ENCODE measurements at regions of chr2 and their contacts with region 1.

Region 1: DNA sequence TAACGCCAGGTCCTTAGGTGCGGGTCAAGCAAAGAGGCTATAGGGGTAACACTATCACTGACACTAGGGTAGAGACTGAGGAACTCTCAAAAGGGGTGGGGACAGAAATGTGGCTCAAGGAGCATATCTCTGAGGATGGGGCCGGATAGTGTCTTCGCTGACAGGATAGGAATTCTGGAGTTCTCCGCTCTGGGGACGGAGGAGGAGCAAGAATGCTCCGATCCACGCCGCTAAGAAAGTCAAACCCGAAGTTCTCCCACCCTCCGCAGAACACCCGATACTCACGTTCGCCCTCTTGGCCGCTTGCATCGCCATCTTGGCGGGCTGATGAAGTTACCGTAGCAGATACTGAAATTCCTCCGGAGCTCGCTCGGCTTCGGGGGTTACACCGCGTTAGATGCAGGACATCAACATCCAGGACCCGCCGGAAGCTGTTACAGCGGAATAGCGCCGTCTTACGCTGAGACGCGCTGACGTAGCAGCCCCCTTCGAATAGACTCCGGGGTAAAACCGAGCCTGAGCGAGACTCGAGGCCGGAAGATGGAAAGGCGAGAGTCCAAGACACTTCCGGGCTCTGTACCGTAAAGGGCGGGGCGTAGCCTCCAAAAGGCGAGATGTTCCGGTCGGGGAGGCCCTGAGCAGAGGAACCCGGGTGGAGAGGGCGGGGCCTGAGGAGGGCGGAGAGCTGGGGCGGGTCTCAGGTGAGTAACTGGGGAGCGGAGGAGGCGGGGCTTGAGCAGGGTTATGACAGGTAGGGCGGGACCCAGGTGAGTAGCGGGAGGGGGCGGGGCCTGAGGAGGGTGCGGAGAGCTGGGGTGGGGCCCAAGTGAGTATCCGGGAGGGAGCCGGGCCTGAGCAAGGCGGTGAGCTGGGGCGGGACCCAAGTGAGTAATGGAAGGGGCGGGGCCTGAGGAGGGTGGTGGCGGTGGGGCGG is at the start of gene SF3B6:
- DNase-seq: peak; percentile 100
- H3K4me3 Mint-ChIP-seq: peak within 1 kb of the TSS; percentile 97
- H3K27ac Mint-ChIP-seq: peak within 1 kb of the TSS; percentile 97
- H3K4me1 Mint-ChIP-seq: peaks cover 22% of the 10 kb centered on the region
- H3K27me3 Mint-ChIP-seq: no peaks in the 10 kb centered on the region
- CTCF ChIP-seq: no peak
- total RNA-seq, gene SF3B6: 141 and 180 TPM in 2 replicates

Region 2: GRCh38 chr2:24046930-24047702 is 29.1 kb before region 1 on chr2 and contains the start of gene WDCP:
- CTCF ChIA-PET with region 1: interaction called, 3 read pairs
- POLR2A ChIA-PET with region 1: interaction called, 44 read pairs
- intact Hi-C with region 1: no loop called
- DNase-seq: peak; percentile 99
- H3K4me3 Mint-ChIP-seq: peak within 1 kb of the TSS; percentile 97
- H3K27ac Mint-ChIP-seq: peak within 1 kb of the TSS; percentile 83
- H3K4me1 Mint-ChIP-seq: peaks cover 24% of the 10 kb centered on the region
- H3K27me3 Mint-ChIP-seq: no peaks in the 10 kb centered on the region
- CTCF ChIP-seq: no peak
- total RNA-seq, gene WDCP: 9.0 and 11.2 TPM in 2 replicates

Region 3: GRCh38 chr2:24065341-24065740 is 10.8 kb before region 1 on chr2:
- CTCF ChIA-PET with region 1: interaction called, 3 read pairs
- POLR2A ChIA-PET with region 1: interaction called, 27 read pairs
- intact Hi-C with region 1: no loop called
- DNase-seq: no peak
- H3K4me3 Mint-ChIP-seq: no peak overlapping the region
- H3K27ac Mint-ChIP-seq: no peak overlapping the region
- H3K4me1 Mint-ChIP-seq: no peaks in the 10 kb centered on the region
- H3K27me3 Mint-ChIP-seq: no peaks in the 10 kb centered on the region
- CTCF ChIP-seq: no peak

Region 4: GRCh38 chr2:24123195-24123921 is 47.2 kb after region 1 on chr2 and contains the starts of genes FAM228B and PFN4:
- CTCF ChIA-PET with region 1: interaction called, 3 read pairs
- POLR2A ChIA-PET with region 1: interaction called, 16 read pairs
- intact Hi-C with region 1: no loop called
- DNase-seq: peak; percentile 77
- H3K4me3 Mint-ChIP-seq: peak within 1 kb of the TSS; percentile 79
- H3K27ac Mint-ChIP-seq: peak within 1 kb of the TSS; percentile 81
- H3K4me1 Mint-ChIP-seq: peaks cover 16% of the 10 kb centered on the region
- H3K27me3 Mint-ChIP-seq: no peaks in the 10 kb centered on the region
- CTCF ChIP-seq: no peak
- total RNA-seq, gene FAM228B: 10.6 and 19.5 TPM in 2 replicates
- total RNA-seq, gene PFN4: 1.8 and 2.6 TPM in 2 replicates